Naive thymus-derived CD4-positive, alpha-beta T cell (primary cell): ENCODE measurements at regions of chr10 and their contacts with region 1.

Region 1: GRCh38 chr10:77837240-77837924 is 89.2 kb downstream of the DLG5 start:
- DNase-seq: peak in 8 of 9 donors; percentile 15 to 62 (median 50)
- ATAC-seq: peak; percentile 61
- H3K4me3 ChIP-seq: no peak overlapping the region
- H3K4me3 Mint-ChIP-seq: peak overlapping the region in 3 of 10 donors; percentile 20 to 57 (median 41)
- H3K27ac ChIP-seq: no peak overlapping the region
- H3K27ac Mint-ChIP-seq: peak overlapping the region in 5 of 9 donors; percentile 38 to 72 (median 69)
- H3K4me1 ChIP-seq: peaks cover 6 to 25% of the 10 kb centered on the region in 2 donors
- H3K4me1 Mint-ChIP-seq: peaks cover 6 to 22% (median 8%) of the 10 kb centered on the region in 7 donors
- H3K27me3 ChIP-seq: no peaks in the 10 kb centered on the region
- H3K27me3 Mint-ChIP-seq: no peaks in the 10 kb centered on the region

Region 2: GRCh38 chr10:77165445-77166208 is 671.8 kb before region 1 on chr10:
- CTCF ChIA-PET with region 1: no interaction called
- POLR2A ChIA-PET with region 1: no interaction called
- intact Hi-C with region 1: loop called in 1 of 2 experiments (anchors 2 kb)
- DNase-seq: peak in 6 of 9 donors; percentile 22 to 34 (median 28)
- ATAC-seq: peak; percentile 60
- H3K4me3 ChIP-seq: no peak overlapping the region
- H3K4me3 Mint-ChIP-seq: peak overlapping the region in 7 of 10 donors; percentile 7 to 73 (median 62)
- H3K27ac ChIP-seq: no peak overlapping the region
- H3K27ac Mint-ChIP-seq: no peak overlapping the region
- H3K4me1 ChIP-seq: no peaks in the 10 kb centered on the region
- H3K4me1 Mint-ChIP-seq: peaks cover 0 to 5% (median 3%) of the 10 kb centered on the region in 7 donors
- H3K27me3 ChIP-seq: no peaks in the 10 kb centered on the region
- H3K27me3 Mint-ChIP-seq: peaks cover 24 to 44% (median 39%) of the 10 kb centered on the region in 5 donors

Region 3: GRCh38 chr10:77692782-77693181 is 144.6 kb before region 1 on chr10:
- CTCF ChIA-PET with region 1: no interaction called
- POLR2A ChIA-PET with region 1: no interaction called
- intact Hi-C with region 1: no loop called
- DNase-seq: no peak
- ATAC-seq: no peak
- H3K4me3 ChIP-seq: no peak overlapping the region
- H3K4me3 Mint-ChIP-seq: no peak overlapping the region
- H3K27ac ChIP-seq: no peak overlapping the region
- H3K27ac Mint-ChIP-seq: no peak overlapping the region
- H3K4me1 ChIP-seq: no peaks in the 10 kb centered on the region
- H3K4me1 Mint-ChIP-seq: no peaks in the 10 kb centered on the region
- H3K27me3 ChIP-seq: no peaks in the 10 kb centered on the region
- H3K27me3 Mint-ChIP-seq: peaks cover 4 to 31% (median 26%) of the 10 kb centered on the region in 5 donors

Region 4: DNA sequence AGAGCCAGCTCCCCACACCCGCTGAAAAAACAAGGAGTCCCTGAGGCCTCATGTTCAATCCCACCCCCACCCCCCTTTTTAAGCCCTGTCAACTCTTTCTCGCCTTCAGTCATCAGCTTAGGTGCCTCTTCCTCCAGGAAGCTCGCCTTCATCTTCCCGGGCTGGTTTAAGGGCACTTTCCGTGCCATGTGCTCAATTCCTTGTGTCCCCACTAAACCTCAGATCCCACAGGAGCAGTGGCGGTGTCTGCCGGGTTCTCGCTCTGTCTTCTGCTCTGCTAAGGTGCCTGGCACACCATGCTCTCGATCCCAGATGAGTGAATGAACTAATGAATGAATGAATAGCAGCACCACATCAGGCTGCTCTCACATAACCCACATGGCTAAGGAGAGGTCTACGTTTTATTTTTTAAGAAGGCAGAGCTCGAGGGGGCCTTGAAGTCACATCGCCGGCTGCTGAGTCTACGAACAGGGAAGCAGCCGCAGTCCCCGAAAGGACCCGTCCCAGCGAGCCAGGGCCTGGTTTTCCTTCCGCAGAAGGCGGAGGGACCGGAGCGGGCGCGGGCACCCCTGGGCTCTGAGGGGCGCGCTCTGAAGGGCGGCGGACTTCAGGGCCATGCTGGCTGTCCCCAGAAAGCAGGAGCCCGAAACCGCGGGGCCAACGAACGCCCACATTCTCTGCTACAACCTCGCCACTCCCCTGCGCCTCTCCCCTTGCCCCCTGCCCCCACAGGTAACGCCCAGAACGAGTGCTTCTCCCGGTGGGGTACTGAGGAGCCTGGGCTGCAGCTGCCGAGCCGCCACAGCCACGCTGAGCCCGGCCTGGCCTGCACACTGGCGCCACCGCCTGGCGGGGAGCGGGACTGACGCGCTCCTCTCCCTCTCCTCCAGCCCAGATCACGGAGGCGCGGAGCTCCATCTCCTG is 126.4 kb before region 1 on chr10:
- CTCF ChIA-PET with region 1: interaction called, 4 read pairs
- POLR2A ChIA-PET with region 1: no interaction called
- intact Hi-C with region 1: loop called in 1 of 2 experiments (anchors 1 kb)
- DNase-seq: peak; percentile 26 to 82 (median 55)
- ATAC-seq: peak; percentile 95
- H3K4me3 ChIP-seq: peak overlapping the region; percentile 30
- H3K4me3 Mint-ChIP-seq: peak overlapping the region; percentile 24 to 70 (median 54)
- H3K27ac ChIP-seq: no peak overlapping the region
- H3K27ac Mint-ChIP-seq: no peak overlapping the region
- H3K4me1 ChIP-seq: no peaks in the 10 kb centered on the region
- H3K4me1 Mint-ChIP-seq: peaks cover 3 to 7% (median 5%) of the 10 kb centered on the region in 7 donors
- H3K27me3 ChIP-seq: peaks cover 0 to 2% of the 10 kb centered on the region in 2 donors
- H3K27me3 Mint-ChIP-seq: peaks cover 6 to 52% (median 41%) of the 10 kb centered on the region in 5 donors

Region 5: DNA sequence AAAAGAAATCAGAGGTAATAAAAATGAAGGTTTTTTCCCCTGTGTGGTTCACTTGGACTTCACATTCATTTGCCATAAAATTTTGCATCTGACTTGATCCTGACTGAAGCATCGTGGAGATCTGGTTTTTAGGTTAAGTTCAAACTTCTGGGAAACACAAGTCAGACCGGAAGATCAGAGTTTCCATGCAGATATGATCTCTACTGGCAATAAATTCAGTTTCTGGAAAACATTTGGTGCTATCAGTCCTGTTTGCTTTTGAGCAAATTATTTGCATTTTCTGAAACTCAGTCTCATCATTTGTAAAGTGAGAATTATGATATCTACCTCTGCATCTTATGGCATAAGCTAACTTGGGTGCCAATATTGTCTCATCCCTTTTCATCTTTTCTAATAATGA is 118.4 kb before region 1 on chr10:
- CTCF ChIA-PET with region 1: interaction called, 10 read pairs
- POLR2A ChIA-PET with region 1: no interaction called
- intact Hi-C with region 1: loop called in 1 of 2 experiments (anchors 1 kb)
- DNase-seq: no peak
- ATAC-seq: no peak
- H3K4me3 ChIP-seq: no peak overlapping the region
- H3K4me3 Mint-ChIP-seq: no peak overlapping the region
- H3K27ac ChIP-seq: no peak overlapping the region
- H3K27ac Mint-ChIP-seq: no peak overlapping the region
- H3K4me1 ChIP-seq: no peaks in the 10 kb centered on the region
- H3K4me1 Mint-ChIP-seq: peaks cover 0 to 2% (median 0%) of the 10 kb centered on the region in 7 donors
- H3K27me3 ChIP-seq: no peaks in the 10 kb centered on the region
- H3K27me3 Mint-ChIP-seq: peaks cover 0 to 23% (median 14%) of the 10 kb centered on the region in 5 donors

Region 6: DNA sequence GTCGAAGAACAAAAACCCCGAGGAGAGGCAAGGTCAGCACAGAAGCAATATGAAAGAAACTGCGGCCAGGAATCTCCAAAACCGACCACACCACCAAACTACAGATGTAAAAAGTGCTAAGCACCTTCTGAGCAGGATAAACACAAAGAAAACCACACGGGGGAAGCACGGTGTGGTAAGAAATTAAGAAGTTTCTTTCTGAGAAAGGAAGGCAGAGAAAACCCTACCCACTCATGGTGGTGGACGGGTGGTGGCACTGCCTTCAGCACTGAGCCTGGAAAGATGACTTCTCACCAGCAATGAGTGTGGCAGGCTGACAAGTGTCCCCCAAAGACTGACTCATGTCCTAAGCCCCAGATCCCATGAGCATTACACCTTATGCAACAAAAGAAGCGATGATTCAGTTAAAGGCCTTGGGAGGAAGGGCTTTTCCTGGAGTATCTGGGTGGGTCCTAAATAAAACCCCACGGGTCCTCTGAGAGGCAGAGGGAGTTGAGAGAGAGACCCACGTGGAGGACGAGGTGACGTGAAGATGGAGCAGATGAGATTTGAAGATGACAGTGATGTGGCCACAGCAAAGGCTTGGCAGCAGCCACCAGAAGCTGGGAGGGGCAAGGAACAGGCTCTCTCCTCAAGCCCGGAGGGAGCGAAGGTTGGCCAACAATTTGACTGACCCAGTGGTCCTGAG is 35.8 kb before region 1 on chr10:
- CTCF ChIA-PET with region 1: no interaction called
- POLR2A ChIA-PET with region 1: no interaction called
- intact Hi-C with region 1: loop called in 1 of 2 experiments (anchors 1 kb)
- DNase-seq: peak in 1 of 9 donors; percentile 51
- ATAC-seq: peak; percentile 73
- H3K4me3 ChIP-seq: no peak overlapping the region
- H3K4me3 Mint-ChIP-seq: peak overlapping the region in 1 of 10 donors; percentile 38
- H3K27ac ChIP-seq: no peak overlapping the region
- H3K27ac Mint-ChIP-seq: peak overlapping the region in 2 of 9 donors; percentile 49 to 55
- H3K4me1 ChIP-seq: peaks cover 0 to 7% of the 10 kb centered on the region in 2 donors
- H3K4me1 Mint-ChIP-seq: peaks cover 5 to 41% (median 8%) of the 10 kb centered on the region in 7 donors
- H3K27me3 ChIP-seq: no peaks in the 10 kb centered on the region
- H3K27me3 Mint-ChIP-seq: peaks cover 0 to 3% (median 0%) of the 10 kb centered on the region in 5 donors

Region 7: GRCh38 chr10:77820349-77820748 is 17.0 kb before region 1 on chr10:
- CTCF ChIA-PET with region 1: no interaction called
- POLR2A ChIA-PET with region 1: no interaction called
- intact Hi-C with region 1: loop called in 1 of 2 experiments (anchors 2 kb)
- DNase-seq: no peak
- ATAC-seq: no peak
- H3K4me3 ChIP-seq: no peak overlapping the region
- H3K4me3 Mint-ChIP-seq: peak overlapping the region in 1 of 10 donors; percentile 45
- H3K27ac ChIP-seq: no peak overlapping the region
- H3K27ac Mint-ChIP-seq: peak overlapping the region in 3 of 9 donors; percentile 17 to 76 (median 45)
- H3K4me1 ChIP-seq: no peaks in the 10 kb centered on the region
- H3K4me1 Mint-ChIP-seq: peaks cover 0 to 13% (median 0%) of the 10 kb centered on the region in 7 donors
- H3K27me3 ChIP-seq: no peaks in the 10 kb centered on the region
- H3K27me3 Mint-ChIP-seq: no peaks in the 10 kb centered on the region